Psoas muscle (tissue), 8 donors: ENCODE measurements at regions of chr19 and their contacts with region 1.

Region 1: DNA sequence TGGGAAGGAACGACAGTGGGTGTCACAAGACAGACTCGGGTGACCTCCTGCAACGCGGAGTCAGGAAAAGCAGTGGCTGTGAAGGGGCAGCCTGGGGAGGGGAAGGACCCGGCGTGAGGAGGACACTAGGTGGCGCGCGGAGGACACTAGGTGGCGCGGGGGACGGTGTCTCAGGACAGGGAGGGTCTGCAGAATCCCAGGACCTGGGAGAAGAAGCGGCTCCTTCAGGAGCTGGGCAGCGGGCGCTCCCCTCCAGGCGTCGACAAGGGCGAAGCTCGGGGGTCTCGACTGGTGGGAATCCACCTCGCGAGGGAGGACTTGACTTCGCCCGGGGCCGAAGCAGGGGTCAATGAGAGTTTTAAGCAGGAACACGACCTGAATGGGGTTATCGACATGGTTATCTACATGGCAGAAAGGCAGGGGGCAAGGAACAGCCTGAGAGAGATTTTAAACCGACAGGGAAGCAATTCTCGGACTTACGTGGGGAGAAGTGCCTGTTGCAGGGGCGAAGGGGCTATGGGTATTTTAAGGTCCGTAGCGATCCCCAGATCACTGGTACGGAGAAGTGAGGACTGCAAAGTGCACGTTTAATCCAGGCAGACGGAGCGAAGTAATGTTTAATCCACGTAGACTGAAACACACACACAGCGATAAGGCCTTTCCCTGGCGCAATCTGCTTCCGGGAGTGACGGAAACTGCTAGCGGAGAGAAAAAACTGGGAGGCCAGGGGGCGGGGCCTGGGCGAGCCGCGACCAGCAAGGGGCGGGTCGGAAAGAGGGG is at the start of gene ZNF616:
- DNase-seq: peak; percentile 98 to 99
- ATAC-seq: peak; percentile 93 to 99 (median 95)
- H3K4me3 ChIP-seq: peak within 1 kb of the TSS; percentile 98
- H3K27ac ChIP-seq: peak within 1 kb of the TSS; percentile 93
- H3K4me1 ChIP-seq: peaks cover 17% of the 10 kb centered on the region
- H3K27me3 ChIP-seq: no peaks in the 10 kb centered on the region
- CTCF ChIP-seq: peak; percentile 79
- total RNA-seq, gene ZNF616: 1.8 to 6.2 (median 3.8) TPM

Region 2: DNA sequence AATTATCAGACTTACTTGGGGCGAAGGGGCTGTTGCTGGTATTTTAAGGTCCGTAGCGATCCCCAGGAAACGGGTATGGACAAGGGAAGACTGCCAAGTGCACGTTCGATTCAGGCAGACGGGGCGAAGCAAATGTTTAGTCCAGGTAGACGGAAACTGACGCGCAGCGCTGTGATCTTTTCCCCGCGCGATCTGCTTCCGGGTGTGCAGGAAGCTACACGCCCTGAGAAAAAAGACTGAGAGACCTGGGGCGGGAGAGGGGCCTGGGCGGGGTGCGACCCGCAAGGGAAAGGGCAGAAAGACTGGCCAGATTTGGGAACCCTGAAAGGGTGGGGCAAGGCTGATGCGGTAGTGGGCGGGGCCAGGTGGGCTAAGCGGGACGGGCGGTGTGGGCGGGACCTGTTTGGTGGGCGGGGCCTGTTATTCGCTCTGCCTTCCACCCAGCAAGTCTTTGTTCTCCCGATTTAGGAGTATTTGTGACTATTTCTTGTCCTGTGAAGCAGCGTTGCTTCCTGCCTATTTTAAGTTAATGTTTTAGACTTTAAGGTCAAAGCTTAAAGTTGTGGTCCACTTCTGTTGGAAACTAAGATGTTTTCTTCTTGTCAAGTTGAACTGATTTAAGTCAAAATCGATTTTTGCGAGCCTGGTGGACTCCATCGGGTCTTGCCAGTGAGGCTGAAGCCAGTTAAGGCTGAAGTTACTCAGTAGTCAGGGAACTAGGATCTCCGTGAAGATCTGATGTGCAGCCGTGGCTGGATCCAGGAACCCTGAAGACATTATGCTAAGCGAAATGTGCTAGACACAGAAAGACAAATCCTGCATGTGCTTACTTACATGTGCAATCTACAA is 32.1 kb after region 1 on chr19 and contains the start of gene ZNF836:
- intact Hi-C with region 1: loop called (anchors 2 kb)
- DNase-seq: peak; percentile 90 to 94
- ATAC-seq: peak; percentile 97 to 99 (median 98)
- H3K4me3 ChIP-seq: peak within 1 kb of the TSS; percentile 89
- H3K27ac ChIP-seq: peak within 1 kb of the TSS; percentile 71
- H3K4me1 ChIP-seq: peaks cover 5% of the 10 kb centered on the region
- H3K27me3 ChIP-seq: no peaks in the 10 kb centered on the region
- CTCF ChIP-seq: no peak
- total RNA-seq, gene ZNF836: 2.1 to 6.4 (median 3.9) TPM

Region 3: GRCh38 chr19:52189735-52190486 is 50.5 kb after region 1 on chr19 and contains the start of gene PPP2R1A:
- intact Hi-C with region 1: loop called (anchors 5 kb)
- DNase-seq: peak; percentile 100
- ATAC-seq: peak; percentile 87 to 93 (median 90)
- H3K4me3 ChIP-seq: peak within 1 kb of the TSS; percentile 97
- H3K27ac ChIP-seq: peak within 1 kb of the TSS; percentile 98
- H3K4me1 ChIP-seq: peaks cover 49% of the 10 kb centered on the region
- H3K27me3 ChIP-seq: no peaks in the 10 kb centered on the region
- CTCF ChIP-seq: no peak
- total RNA-seq, gene PPP2R1A: 182 to 340 (median 268) TPM

Region 4: GRCh38 chr19:52237771-52238400 is 98.4 kb after region 1 on chr19:
- intact Hi-C with region 1: loop called (anchors 1 kb)
- DNase-seq: peak; percentile 33 to 64
- ATAC-seq: peak; percentile 76 to 87 (median 85)
- H3K4me3 ChIP-seq: no peak overlapping the region
- H3K27ac ChIP-seq: no peak overlapping the region
- H3K4me1 ChIP-seq: no peaks in the 10 kb centered on the region
- H3K27me3 ChIP-seq: no peaks in the 10 kb centered on the region
- CTCF ChIP-seq: peak; percentile 96